ENCODE measurements at regions of chr17 and their contacts with region 1.

Region 1: DNA sequence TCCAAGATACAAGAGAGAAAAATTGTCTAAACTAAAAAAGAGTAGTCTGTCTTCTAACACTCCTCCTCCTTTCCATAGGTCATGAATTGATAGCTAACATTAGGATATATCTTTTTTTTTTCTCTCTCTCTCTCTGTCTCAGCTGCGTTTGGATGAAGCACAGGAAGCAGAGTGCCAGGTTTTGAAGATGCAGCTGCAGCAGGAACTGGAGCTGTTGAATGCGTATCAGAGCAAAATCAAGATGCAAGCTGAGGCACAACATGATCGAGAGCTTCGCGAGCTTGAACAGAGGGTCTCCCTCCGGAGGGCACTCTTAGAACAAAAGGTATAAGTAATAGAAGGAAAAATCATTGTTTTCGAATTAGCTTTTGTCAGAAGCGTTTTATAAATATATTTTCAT is 32.9 kb downstream of the ABHD15 start:
- H3K4me3 Mint-ChIP-seq: no peak overlapping the region
- H3K27ac Mint-ChIP-seq: peak overlapping the region; percentile 14
- H3K4me1 Mint-ChIP-seq: no peaks in the 10 kb centered on the region
- H3K27me3 Mint-ChIP-seq: no peaks in the 10 kb centered on the region

Region 2: GRCh38 chr17:29369831-29370735 is 163.9 kb before region 1 on chr17:
- intact Hi-C with region 1: loop called (anchors 2 kb)
- H3K4me3 Mint-ChIP-seq: no peak overlapping the region
- H3K27ac Mint-ChIP-seq: no peak overlapping the region
- H3K4me1 Mint-ChIP-seq: no peaks in the 10 kb centered on the region
- H3K27me3 Mint-ChIP-seq: no peaks in the 10 kb centered on the region

Region 3: DNA sequence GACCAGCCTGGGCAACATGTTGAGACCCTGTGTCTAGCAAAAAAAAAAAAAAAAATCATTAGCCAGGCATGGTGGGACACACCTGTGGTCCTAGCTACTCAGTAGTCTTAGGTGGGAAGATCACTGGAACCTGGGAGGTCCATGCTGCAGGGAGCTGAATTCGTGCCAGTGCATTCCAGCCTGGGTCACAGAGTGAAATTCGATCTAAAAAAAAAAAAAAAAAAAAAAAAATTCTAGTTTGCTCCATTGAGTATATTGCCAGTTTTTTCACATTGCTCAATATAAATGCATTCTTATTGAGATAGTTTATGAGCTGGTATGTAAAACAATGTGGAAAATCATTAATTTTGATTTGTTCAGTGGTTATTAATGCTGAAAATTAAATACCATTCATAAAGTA is 19.2 kb before region 1 on chr17:
- intact Hi-C with region 1: no loop called
- H3K4me3 Mint-ChIP-seq: no peak overlapping the region
- H3K27ac Mint-ChIP-seq: no peak overlapping the region
- H3K4me1 Mint-ChIP-seq: no peaks in the 10 kb centered on the region
- H3K27me3 Mint-ChIP-seq: no peaks in the 10 kb centered on the region